PC-3 (cell line): ENCODE measurements at regions of chr9 and their contacts with region 1.

Region 1: DNA sequence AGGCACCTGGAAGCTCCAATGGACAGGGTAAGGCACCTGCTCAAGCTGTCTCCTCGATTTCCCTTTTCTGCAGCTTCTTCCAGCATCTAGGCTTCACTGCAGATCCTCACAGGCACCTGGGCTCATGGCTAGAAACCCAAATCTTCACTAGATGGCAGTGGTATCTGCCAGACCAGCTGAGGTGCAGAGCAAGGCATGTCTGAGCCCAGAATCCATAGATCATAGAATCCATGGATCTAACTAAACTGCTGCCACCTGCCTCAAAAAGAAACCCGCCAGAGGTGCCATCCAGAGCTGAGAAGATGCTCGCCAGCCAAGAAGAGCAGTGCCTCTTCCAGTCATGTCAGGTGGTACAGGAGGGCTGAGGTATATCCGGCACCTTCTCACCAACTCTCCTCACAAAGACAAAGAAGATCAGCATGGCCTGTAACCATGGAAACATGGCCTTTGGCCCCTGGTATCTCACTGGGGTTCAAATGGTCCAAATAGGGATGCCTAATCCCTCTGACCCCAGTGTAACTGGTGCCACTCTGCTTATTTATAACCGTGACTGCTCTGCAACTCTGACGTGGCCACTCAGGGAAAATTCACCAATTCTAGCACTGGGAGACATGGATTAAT is 6.8 kb downstream of the SHC3 start:
- DNase-seq: peak; percentile 24
- ATAC-seq: peak; percentile 60; the same call in 1 of the 2 replicates
- H3K4me3 ChIP-seq: no peak overlapping the region
- H3K27ac ChIP-seq: no peak overlapping the region
- H3K4me1 ChIP-seq: no peaks in the 10 kb centered on the region; the same call in 1 of the 2 replicates
- H3K27me3 ChIP-seq: no peaks in the 10 kb centered on the region
- CTCF ChIP-seq: no peak; the same call in 1 of the 2 replicates

Region 2: DNA sequence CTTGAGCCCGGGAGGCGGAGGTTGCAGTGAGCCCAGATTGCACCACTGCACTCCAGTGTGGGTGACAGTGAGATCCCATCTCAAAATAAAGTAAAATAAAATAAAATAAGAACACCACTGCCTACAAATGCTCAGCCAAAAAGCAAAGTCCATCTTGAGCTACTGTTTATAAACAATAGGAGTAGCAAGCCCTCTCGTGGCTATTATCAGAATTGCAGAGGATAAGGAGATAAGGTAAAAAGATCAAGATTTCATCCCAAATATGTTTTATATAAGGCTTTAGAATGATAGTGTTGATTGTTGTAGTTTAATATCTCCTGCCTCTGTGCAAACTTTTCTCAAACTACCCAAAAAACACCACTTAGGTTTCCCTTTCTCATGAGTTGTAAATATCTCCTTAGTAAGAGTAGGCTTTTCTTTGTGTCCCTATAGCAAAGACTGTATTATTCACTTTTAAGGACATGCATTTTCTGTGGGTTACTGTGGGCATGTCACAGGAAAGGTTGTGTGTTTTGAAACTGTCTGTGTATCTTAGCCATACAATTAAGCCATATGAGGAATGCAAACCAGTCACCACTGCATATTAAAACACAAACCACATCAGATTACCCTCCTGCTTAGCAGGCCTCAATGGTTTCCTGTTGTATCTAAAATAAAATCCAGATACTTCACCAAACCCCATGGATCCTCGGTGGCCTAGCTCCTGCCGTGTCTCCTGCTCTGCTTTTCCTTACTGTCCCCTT is 107.4 kb after region 1 on chr9:
- CTCF ChIA-PET with region 1: interaction called, 4 read pairs
- POLR2A ChIA-PET with region 1: no interaction called
- intact Hi-C with region 1: loop called (anchors 1 kb)
- DNase-seq: peak; percentile 78
- ATAC-seq: peak; percentile 51; the same call in 1 of the 2 replicates
- H3K4me3 ChIP-seq: no peak overlapping the region
- H3K27ac ChIP-seq: no peak overlapping the region
- H3K4me1 ChIP-seq: no peaks in the 10 kb centered on the region
- H3K27me3 ChIP-seq: no peaks in the 10 kb centered on the region
- CTCF ChIP-seq: peak; percentile 70

Region 3: DNA sequence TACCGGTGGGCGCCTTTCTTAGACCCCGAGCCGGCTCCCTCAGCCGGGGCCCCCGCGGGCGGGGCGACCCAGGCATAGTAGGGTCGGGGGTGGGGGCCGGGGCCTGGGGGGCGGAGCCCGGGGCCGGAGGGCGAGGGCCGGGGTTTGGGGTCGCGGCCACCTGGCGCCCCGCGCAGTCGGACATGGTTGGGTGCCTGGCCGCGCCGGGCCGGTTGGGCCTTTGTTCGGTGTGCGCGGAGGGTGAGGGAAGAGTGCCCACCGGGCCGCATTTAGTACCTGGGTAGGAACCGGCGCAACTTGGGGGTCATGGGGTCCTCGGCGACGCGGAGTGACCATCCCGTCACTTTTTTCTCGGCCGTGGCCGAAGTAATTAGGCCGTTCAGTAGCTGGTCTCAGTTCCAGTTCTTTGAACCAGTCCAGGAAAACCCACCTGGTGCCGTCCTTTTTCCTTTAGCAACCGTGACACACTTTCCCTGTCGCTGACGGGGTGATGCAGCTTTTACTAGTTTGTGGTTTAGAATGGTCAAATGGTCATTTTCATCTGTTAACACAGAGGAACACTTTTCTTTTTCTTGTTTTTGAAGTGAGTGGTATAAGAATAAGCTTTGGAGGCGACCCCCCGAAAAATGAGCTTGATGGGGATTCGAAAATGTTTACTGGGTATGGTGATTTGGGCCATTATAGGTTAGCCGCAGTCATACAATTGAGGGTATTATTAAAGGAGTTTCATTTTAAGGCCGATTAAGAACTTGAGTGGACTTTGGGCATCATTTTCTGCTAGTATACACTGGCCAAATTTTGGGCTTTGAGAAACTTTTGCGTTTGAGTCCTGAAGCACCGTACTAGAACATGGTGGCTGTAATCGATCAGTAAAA is 139.8 kb after region 1 on chr9:
- CTCF ChIA-PET with region 1: no interaction called
- POLR2A ChIA-PET with region 1: no interaction called
- intact Hi-C with region 1: loop called (anchors 2 kb)
- DNase-seq: no peak
- ATAC-seq: 0 out of 2 replicates have a peak, but pooled peaks have one; percentile 2
- H3K4me3 ChIP-seq: peak overlapping the region; percentile 85
- H3K27ac ChIP-seq: peak overlapping the region; percentile 36
- H3K4me1 ChIP-seq: peaks cover 26% of the 10 kb centered on the region
- H3K27me3 ChIP-seq: no peaks in the 10 kb centered on the region
- CTCF ChIP-seq: no peak